Panc1 (cell line): ENCODE measurements at regions of chr6 and their contacts with region 1.

Region 1: DNA sequence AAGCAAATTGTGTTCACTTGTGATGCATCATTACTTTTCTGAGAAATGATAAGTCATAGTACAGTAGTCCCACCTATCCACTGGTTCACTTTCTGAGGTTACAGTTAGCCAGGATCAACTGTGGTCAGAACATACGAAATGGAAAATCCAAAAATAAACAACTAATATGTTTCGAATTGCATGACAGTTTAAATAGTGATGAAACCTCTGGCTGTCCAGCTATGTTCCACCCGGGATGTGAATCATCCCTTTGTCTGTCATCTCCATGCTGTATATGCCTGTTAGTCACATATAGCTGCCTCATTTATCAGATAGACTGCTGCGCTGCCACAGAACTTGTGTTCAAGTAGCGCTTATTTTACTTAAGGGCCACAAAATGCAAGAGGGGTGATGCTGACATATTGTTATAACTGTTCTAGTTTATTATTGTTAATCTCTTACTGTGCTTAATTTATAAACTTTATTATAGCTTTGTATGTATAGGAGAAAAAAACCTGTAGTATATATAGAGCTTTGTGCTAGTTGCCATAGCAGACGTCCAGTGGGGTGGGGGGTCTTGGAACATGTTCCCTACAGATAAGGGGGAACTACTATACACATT is 29.2 kb downstream of the AFDN start:
- DNase-seq: peak; percentile 91
- ATAC-seq: peak; percentile 75
- H3K4me3 ChIP-seq: no peak overlapping the region
- H3K27ac ChIP-seq: peak overlapping the region; percentile 82
- H3K4me1 ChIP-seq: peaks cover 79% of the 10 kb centered on the region
- H3K27me3 ChIP-seq: no peaks in the 10 kb centered on the region
- CTCF ChIP-seq: no peak

Region 2: GRCh38 chr6:167341665-167342655 is 514.0 kb before region 1 on chr6:
- CTCF ChIA-PET with region 1: no interaction called
- POLR2A ChIA-PET with region 1: no interaction called
- in situ Hi-C with region 1: no loop called
- intact Hi-C with region 1: no loop called
- DNase-seq: no peak
- ATAC-seq: no peak
- H3K4me3 ChIP-seq: no peak overlapping the region
- H3K27ac ChIP-seq: no peak overlapping the region
- H3K4me1 ChIP-seq: no peaks in the 10 kb centered on the region
- H3K27me3 ChIP-seq: no peaks in the 10 kb centered on the region
- CTCF ChIP-seq: no peak

Region 3: GRCh38 chr6:167872538-167873210 is 16.7 kb after region 1 on chr6:
- CTCF ChIA-PET with region 1: no interaction called
- POLR2A ChIA-PET with region 1: interaction called, 11 read pairs
- in situ Hi-C with region 1: no loop called
- intact Hi-C with region 1: no loop called
- DNase-seq: no peak
- ATAC-seq: no peak
- H3K4me3 ChIP-seq: no peak overlapping the region
- H3K27ac ChIP-seq: no peak overlapping the region
- H3K4me1 ChIP-seq: no peaks in the 10 kb centered on the region
- H3K27me3 ChIP-seq: no peaks in the 10 kb centered on the region
- CTCF ChIP-seq: no peak